Kidney (tissue), 22 donors: ENCODE measurements at regions of chr3 and their contacts with region 1.

Region 1: DNA sequence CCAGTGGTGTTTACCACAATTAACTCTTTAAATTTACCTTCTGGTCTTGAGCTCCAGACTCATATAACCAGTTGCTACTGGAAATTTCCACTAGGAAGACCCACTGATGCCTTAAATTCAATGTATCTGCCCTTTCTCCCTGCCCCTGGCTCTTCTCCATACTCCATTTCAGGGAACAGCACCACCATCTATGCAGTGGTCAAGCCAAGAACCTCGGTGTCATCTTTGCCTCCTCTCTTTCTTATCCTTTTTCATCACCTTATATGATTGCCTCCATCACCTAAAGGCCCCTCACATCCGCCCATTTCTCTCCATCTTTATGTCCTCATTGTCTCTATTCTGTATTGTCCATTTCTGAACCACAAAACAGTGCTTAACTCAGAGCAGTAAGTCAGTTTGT is 20.7 kb upstream of the MFSD1 start:
- DNase-seq: no peak
- H3K4me3 ChIP-seq: no peak overlapping the region
- H3K27ac ChIP-seq: no peak overlapping the region
- H3K4me1 ChIP-seq: no peaks in the 10 kb centered on the region
- H3K27me3 ChIP-seq: no peaks in the 10 kb centered on the region
- CTCF ChIP-seq: no peak

Region 2: GRCh38 chr3:158731938-158732855 is 49.0 kb before region 1 on chr3 and contains the start of gene RARRES1:
- intact Hi-C with region 1: loop called (anchors 5 kb)
- DNase-seq: peak; percentile 75 to 90 (median 84)
- H3K4me3 ChIP-seq: peak within 1 kb of the TSS; percentile 32 to 68 (median 53)
- H3K27ac ChIP-seq: no peak within 1 kb of the TSS
- H3K4me1 ChIP-seq: peaks cover 0 to 11% (median 4%) of the 10 kb centered on the region in 3 donors
- H3K27me3 ChIP-seq: no peaks in the 10 kb centered on the region
- CTCF ChIP-seq: no peak
- total RNA-seq, gene RARRES1: 94.0 TPM